ENCODE measurements at regions of chr6 and their contacts with region 1.

Region 1: DNA sequence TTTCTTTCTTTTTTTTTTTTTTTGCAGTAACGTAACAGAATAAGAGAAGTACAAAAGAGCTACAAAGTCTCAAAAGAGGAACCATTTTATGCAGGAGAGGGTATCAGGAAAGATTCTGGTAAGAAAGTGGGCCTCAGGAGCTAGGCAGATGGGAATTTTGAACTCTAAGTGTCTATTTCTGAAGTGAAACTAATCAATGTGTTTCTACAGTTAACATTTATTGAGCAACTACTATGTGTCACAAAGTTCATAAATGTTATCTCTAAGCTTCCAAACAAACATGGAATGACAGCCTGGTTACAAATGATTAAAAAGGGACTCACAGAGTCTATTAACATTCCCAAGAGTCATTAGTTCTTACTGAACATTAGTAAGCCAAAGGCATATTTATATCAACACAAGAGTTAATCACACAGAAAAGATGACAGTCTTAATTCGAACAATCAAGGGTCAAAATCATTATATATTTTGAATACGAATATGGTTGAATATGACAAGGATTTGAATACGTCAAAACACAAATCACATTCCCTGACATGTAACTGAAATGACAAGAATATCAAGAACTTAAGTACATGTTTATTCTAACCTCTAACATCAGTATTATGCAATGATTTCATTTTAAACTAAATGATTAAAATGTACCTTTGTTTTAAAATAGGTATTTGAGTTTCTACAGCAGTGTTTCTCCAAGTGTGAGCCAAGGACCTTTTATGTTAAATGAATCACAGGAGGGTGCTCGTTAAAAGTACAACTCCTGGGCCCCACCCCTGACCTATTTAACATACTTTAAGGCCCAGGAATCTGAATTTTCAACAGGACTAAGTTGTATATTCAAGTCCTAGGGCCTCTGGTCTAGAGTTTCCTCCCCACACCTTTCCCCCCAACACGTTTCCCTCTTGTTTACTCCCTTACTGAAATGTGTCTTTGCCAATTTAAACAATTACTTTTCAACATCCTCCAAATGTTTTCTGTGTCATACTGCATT is 89.7 kb downstream of the ATXN1 start:
- DNase-seq: no peak
- ATAC-seq: no peak
- H3K4me3 ChIP-seq: no peak overlapping the region
- H3K27ac ChIP-seq: peak overlapping the region; percentile 57
- H3K4me1 ChIP-seq: peaks cover 77% of the 10 kb centered on the region
- H3K27me3 ChIP-seq: no peaks in the 10 kb centered on the region
- CTCF ChIP-seq: no peak

Region 2: GRCh38 chr6:16741112-16742016 is 69.8 kb after region 1 on chr6:
- CTCF ChIA-PET with region 1: no interaction called
- POLR2A ChIA-PET with region 1: interaction called, 14 read pairs
- in situ Hi-C with region 1: no loop called
- intact Hi-C with region 1: no loop called
- DNase-seq: no peak
- ATAC-seq: peak; percentile 73; the same call in 1 of the 2 replicates
- H3K4me3 ChIP-seq: no peak overlapping the region
- H3K27ac ChIP-seq: peak overlapping the region; percentile 80
- H3K4me1 ChIP-seq: peaks cover 70% of the 10 kb centered on the region
- H3K27me3 ChIP-seq: no peaks in the 10 kb centered on the region
- CTCF ChIP-seq: no peak